PC-9 (cell line): ENCODE measurements at regions of chr3 and their contacts with region 1.

Region 1: DNA sequence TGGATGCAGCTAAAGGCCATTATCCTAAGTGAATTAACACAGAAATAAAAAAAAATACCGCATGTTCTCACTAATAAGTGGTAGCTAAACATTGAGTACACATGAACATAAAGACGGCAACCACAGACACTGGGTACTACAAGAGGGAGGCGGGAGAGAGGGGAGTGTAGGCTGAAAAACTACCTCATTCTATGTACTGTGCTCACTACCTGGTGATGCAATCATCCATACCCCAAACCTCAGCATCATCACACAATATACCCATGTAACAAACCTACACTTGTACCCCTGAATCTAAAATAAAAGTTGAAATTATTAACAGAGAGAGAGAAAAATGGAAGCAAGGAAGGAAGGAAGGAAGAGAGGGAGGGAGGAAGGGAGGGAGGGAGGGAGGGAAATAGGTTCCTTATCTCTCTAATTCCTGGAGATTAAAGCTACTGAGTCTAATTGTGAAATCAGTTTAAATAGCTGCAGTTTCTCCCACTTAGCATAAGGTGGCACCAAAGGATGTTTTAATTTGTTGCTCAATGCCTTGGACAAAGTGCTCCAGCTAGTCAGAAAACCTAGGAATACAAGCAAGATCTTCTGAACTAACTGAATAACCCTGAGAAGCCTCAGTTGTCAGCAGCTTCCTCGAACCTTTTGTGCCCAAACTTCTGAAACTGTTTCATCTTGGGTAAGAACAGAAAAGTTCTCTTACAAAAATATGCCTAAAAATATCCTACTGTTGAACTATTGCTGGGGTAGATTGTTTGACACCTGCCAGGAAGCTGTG is 79.4 kb upstream of the ATP11B start:
- DNase-seq: peak; percentile 24 to 86
- H3K4me3 ChIP-seq: no peak overlapping the region
- H3K27ac ChIP-seq: no peak overlapping the region
- H3K4me1 ChIP-seq: peaks cover 24% of the 10 kb centered on the region
- H3K27me3 ChIP-seq: no peaks in the 10 kb centered on the region
- CTCF ChIP-seq: peak; percentile 92

Region 2: DNA sequence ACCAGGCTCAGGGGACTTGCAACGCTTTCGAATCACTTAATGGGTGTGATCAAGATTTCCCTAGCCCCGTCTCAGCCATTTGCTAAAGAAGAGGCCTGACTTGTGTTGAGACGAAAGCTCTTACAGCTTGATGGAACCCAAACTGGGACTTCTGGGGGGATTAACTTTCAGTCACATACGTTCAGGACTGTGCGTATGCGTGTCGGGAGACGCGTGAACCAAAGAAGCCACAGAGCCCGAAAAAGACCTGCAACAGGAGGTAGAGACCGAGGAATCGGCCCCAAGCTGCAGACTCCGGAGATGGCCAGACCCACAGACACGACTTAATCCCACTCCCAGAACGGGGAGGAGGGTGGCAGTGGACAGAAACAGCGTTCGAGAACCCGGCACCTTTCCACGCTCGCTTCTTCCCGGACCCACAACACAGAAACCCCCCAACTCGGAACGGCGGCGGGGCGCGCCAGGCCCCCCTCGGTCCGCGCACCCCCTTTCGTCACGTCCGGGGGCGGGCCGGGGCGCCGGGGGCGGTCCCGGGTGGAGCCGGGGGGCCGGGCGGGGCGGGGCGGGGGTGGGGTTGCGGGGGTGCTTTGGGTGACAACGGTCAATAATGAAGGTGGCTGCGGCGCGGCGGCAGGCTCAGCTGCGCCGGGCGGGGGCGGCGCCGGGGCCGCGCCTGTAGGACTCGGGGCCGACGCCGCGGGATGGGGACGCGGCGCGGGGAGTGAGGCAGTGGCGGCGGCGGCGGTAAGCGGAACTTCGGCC is 79.2 kb after region 1 on chr3 and contains the start of gene ATP11B:
- CTCF ChIA-PET with region 1: interaction called, 5 read pairs
- POLR2A ChIA-PET with region 1: interaction called, 5 read pairs
- intact Hi-C with region 1: loop called (anchors 2 kb)
- DNase-seq: peak; percentile 69 to 84
- H3K4me3 ChIP-seq: peak within 1 kb of the TSS; percentile 68
- H3K27ac ChIP-seq: peak within 1 kb of the TSS; percentile 87
- H3K4me1 ChIP-seq: peaks cover 38% of the 10 kb centered on the region
- H3K27me3 ChIP-seq: no peaks in the 10 kb centered on the region
- CTCF ChIP-seq: no peak
- total RNA-seq, gene ATP11B: 48.3 and 66.5 TPM in 2 replicates

Region 3: DNA sequence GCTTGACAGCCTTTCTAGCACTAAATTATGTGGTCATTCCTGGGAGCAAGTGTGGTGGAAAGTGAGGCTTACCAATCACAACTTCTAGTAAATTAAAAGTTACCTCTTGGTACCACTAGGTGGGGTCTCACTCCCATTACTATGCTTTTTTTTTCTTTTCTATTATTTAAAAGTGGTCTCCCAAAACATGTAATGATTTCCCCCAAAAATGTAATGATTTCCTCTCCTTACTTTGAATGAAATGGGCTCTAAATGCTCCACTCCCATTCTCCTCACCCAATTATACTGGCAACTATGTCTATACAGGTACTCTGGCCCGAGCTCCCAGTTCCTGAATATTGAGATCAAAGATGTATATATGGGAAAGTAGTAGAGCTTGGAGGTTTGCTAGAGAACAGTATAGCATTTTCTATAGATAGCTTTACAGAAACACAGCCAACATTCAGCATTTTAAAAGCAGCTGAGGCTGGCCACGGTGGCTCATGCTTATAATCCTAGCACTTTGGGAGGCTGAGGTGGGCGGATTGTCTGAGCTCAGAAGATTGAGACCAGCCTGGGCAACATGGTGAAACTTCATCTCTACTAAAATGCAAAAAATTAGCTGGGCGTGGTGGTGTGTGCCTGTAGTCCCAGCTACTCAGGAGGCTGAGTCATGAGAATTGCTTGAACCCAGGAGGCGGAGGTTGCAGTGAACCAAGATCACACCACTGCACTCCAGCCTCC is 195.5 kb after region 1 on chr3:
- CTCF ChIA-PET with region 1: interaction called, 4 read pairs
- POLR2A ChIA-PET with region 1: no interaction called
- intact Hi-C with region 1: loop called (anchors 5 kb)
- DNase-seq: no peak
- H3K4me3 ChIP-seq: no peak overlapping the region
- H3K27ac ChIP-seq: no peak overlapping the region
- H3K4me1 ChIP-seq: no peaks in the 10 kb centered on the region
- H3K27me3 ChIP-seq: no peaks in the 10 kb centered on the region
- CTCF ChIP-seq: peak; percentile 83

Region 4: GRCh38 chr3:183178629-183179549 is 465.0 kb after region 1 on chr3:
- CTCF ChIA-PET with region 1: interaction called, 3 read pairs
- POLR2A ChIA-PET with region 1: no interaction called
- intact Hi-C with region 1: loop called (anchors 5 kb)
- DNase-seq: peak; percentile 52 to 73
- H3K4me3 ChIP-seq: peak overlapping the region; percentile 71
- H3K27ac ChIP-seq: no peak overlapping the region
- H3K4me1 ChIP-seq: no peaks in the 10 kb centered on the region; the same call in 1 of the 2 replicates
- H3K27me3 ChIP-seq: no peaks in the 10 kb centered on the region
- CTCF ChIP-seq: peak; percentile 52; the same call in 1 of the 2 replicates

Region 5: DNA sequence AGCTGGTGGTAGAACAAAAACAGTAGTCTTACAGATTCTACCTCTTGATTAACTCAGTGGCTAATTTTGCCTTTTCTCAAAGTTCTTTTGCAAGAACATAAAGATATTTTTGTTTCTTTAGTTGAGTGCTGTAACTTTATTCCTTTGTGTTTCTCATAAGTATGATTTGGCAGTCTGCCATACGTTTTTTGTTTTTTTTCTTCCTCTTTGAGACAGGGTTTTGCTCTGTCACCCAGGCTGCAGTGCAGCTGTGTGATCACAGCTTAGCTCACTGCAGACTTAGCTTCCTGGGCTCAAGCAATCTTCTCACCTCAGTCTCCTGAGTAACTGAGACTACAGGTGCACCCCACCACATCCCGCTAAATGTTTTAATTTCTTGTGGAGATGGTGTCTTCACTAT is 561.5 kb after region 1 on chr3:
- CTCF ChIA-PET with region 1: interaction called, 10 read pairs
- POLR2A ChIA-PET with region 1: no interaction called
- intact Hi-C with region 1: no loop called
- DNase-seq: peak; percentile 48 to 82
- H3K4me3 ChIP-seq: peak overlapping the region; percentile 7; the same call in 1 of the 2 replicates
- H3K27ac ChIP-seq: peak overlapping the region; percentile 87
- H3K4me1 ChIP-seq: peaks cover 64% of the 10 kb centered on the region
- H3K27me3 ChIP-seq: no peaks in the 10 kb centered on the region
- CTCF ChIP-seq: no peak